GM12878 (cell line): ENCODE measurements at regions of chr17 and their contacts with region 1.

Region 1: GRCh38 chr17:38729886-38730525 is at the start of gene CISD3:
- DNase-seq: no peak
- ATAC-seq: peak; percentile 92
- H3K4me3 ChIP-seq: peak within 1 kb of the TSS; percentile 90
- H3K27ac ChIP-seq: peak within 1 kb of the TSS; percentile 52
- H3K4me1 ChIP-seq: peaks cover 38% of the 10 kb centered on the region
- H3K27me3 ChIP-seq: no peaks in the 10 kb centered on the region
- CTCF ChIP-seq: peak; percentile 61 to 81 (median 65); a peak in 4 of 6 replicates
- EP300 ChIP-seq: 0 out of 4 replicates have a peak, but pooled peaks of 1 of the 2 experiments have one; percentile 28
- POLR2A ChIP-seq: peak; percentile 71; the same call in 1 of the 2 replicates
- RAD21 ChIP-seq: peak; percentile 33; the same call in 1 of the 2 replicates
- polyA plus RNA-seq, gene CISD3: 2.6 to 5.3 TPM

Region 2: DNA sequence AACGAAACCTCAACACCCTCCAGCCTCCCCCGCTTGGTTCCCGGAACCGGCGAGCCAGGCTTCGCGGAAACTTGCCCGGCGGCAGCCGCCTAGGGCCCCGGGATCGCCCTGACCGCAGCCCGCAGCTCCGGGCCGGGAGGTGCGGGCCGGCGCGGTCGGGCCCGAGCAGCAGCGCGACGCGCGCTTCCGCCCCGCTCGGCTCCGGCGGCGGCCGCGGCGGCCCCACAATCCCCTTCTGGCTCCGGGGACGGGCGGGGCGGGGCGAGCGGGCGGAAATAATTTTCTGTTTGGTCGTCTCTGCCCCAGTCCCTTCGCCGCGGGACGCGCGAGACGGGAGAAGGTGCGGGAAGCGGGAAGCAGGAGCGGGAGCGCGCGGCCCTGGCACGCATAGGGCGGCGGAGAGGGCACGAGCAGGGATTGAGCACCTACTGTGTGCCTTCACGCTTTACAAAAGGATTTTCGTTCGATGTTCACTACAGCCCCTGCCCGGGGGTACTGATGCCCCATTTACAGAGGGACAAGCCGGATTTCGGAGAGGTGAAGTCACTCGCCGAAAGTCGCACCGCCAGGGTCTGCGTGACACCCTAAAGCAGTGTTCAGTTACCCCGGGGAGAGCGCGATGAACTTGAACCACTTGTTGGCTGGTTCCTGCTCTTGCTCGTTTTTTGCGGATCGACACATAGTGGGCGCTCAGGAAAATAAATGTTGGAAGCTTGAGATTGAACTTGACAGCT is 27.7 kb before region 1 on chr17:
- CTCF ChIA-PET with region 1: interaction called, 17 read pairs
- POLR2A ChIA-PET with region 1: interaction called, 9 read pairs
- RAD21 ChIA-PET with region 1: interaction called, 20 read pairs
- SMC1A ChIA-PET with region 1: interaction called, 6 read pairs
- in situ Hi-C with region 1: no loop called
- intact Hi-C with region 1: loop called (anchors 2 kb)
- DNase-seq: no peak
- ATAC-seq: peak; percentile 38
- H3K4me3 ChIP-seq: peak overlapping the region; percentile 91
- H3K27ac ChIP-seq: peak overlapping the region; percentile 100
- H3K4me1 ChIP-seq: peaks cover 27% of the 10 kb centered on the region
- H3K27me3 ChIP-seq: no peaks in the 10 kb centered on the region
- CTCF ChIP-seq: no peak
- EP300 ChIP-seq: peak; percentile 8 to 56; a peak in 1 of 4 replicates
- POLR2A ChIP-seq: peak; percentile 90
- RAD21 ChIP-seq: no peak